A549 (cell line): ENCODE measurements at regions of chr3 and their contacts with region 1.

Region 1: DNA sequence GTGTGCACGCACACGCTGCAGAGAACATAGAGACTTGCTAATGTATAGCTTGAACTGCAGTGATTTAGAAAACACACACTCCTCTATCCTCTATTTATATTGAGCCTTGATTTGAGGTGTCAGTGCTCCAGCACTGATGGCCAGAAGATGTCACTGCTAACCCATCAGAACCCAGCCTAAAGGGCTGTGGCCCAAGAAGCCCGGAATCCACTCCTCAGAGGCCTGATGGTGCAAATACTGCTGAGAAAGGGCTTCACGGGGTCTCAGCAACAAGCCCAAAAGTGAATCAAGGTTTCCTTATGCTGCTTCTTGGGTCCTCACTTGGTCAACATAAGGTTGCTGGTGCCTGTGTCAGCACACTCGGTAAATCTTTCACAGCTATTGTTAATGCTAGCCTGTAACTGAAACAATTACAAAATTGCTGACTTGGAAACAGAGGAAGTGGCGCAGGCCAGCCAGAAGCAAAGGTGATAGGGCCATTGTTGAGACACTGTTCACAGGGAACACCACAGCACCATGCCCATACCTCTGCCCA is 60.3 kb downstream of the HEG1 start:
- DNase-seq: peak; percentile 56 to 58
- ATAC-seq: peak; percentile 97
- H3K4me3 ChIP-seq: no peak overlapping the region
- H3K27ac ChIP-seq: peak overlapping the region; percentile 15 to 76; a peak in 4 of 6 replicates
- H3K4me1 ChIP-seq: 0 out of 3 replicates have a peak, but pooled peaks cover 3% of the 10 kb centered on the region
- CTCF ChIP-seq: peak; percentile 72
- EP300 ChIP-seq: no peak
- POLR2A ChIP-seq: no peak
- RAD21 ChIP-seq: peak; percentile 90

Region 2: DNA sequence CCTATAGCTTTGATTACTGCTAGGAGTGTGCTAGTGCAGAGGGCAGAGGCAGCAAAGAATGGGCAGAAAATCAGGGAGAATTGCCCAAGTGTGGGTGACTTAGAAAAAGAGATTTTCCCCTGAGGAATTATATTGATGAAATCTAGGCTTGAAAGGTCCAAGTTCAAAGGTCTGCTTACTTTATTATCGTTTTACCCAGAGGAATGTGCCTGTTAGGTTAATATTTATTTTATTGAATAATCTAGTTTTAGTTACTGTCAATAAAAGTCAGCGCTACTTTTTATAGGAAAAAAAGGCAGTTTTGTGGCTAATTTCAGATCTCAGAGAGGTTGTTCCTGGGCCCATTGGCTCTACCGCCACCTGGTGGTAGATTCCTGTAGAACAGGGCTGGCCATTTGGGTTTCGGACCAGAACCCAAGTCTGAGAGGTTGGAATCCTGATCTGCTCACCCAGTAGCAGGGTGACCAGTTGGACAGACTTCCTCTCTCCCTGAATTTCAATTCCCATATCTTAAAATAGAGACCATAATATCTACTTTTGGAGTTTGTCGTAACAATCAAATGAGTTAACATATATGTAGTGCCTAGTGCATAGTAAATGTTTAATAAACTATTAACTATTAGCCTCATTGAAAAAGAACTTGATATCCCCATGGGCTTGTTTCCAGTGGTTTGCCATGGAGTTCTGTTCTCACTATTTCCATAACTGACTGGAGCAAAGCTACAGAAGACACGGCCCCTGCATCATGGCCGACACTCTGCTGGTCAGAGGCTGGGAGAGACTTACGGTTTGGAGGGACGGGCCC is 442.3 kb after region 1 on chr3:
- CTCF ChIA-PET with region 1: interaction called, 96 read pairs
- POLR2A ChIA-PET with region 1: no interaction called
- DNase-seq: peak; percentile 15 to 22
- ATAC-seq: peak in 1 of 2 experiments; percentile 72; a peak in 3 of 6 replicates
- H3K4me3 ChIP-seq: no peak overlapping the region
- H3K27ac ChIP-seq: no peak overlapping the region
- H3K4me1 ChIP-seq: no peaks in the 10 kb centered on the region
- CTCF ChIP-seq: peak; percentile 85
- EP300 ChIP-seq: no peak
- POLR2A ChIP-seq: no peak
- RAD21 ChIP-seq: peak; percentile 81 to 82

Region 3: DNA sequence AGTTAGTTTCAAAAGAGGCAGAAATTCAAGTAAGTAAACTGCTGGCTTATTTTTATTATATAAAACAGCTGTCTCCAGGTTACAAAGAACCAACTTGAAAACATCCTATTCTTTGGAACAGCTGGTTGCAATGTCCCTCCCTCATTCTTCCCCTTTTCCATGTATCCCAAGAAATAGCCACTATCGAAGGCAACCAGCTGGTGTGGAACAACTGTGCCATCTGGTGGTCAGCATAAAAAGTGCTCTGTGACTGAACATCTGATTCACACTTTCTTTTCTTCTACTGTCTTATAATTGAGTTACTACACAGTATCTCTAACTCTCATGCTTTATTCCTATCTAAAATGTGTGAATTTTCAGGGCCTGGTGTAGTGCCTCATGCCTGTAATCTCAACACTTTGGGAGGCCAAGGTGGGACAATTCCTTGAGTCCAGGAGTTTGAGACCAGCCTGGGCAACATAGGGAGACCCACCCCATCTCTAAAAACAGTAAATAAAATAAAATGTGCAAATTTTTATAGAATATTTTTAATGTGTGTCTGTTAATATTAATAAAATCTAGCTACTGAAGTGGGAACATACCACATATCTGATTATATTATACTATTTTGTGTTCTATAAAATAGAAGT is 590.2 kb after region 1 on chr3:
- CTCF ChIA-PET with region 1: interaction called, 18 read pairs
- POLR2A ChIA-PET with region 1: no interaction called
- DNase-seq: peak; percentile 43 to 64
- ATAC-seq: peak; percentile 64 to 83; a peak in 4 of 6 replicates
- H3K4me3 ChIP-seq: no peak overlapping the region
- H3K27ac ChIP-seq: no peak overlapping the region
- H3K4me1 ChIP-seq: no peaks in the 10 kb centered on the region
- CTCF ChIP-seq: peak; percentile 76
- EP300 ChIP-seq: no peak
- POLR2A ChIP-seq: no peak
- RAD21 ChIP-seq: peak; percentile 72 to 79